Endothelial cell of umbilical vein (primary cell): ENCODE measurements at regions of chr3 and their contacts with region 1.

Region 1: DNA sequence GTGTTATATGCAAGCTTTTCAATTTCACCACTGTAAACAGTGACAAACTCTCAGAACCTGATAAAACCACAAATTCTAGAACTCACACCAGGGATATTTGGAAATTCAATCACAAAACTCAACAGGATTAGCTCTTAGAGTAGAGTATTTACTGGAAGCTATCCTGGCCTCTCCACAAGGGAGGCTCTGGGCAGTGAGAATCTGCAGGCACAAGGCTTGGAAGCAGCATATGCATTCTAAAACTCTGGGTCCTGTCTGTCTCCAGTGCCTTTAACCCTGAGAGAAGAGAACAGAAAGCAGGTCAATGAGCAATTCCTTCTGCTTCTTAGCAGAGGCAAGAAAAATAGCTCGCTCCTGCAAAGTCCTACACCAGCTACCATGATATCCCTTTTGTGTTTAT is 23.4 kb downstream of the PLSCR4 start:
- DNase-seq: no peak
- H3K4me3 ChIP-seq: no peak overlapping the region
- H3K27ac ChIP-seq: no peak overlapping the region
- H3K4me1 ChIP-seq: peaks cover 16% of the 10 kb centered on the region
- H3K27me3 ChIP-seq: no peaks in the 10 kb centered on the region
- CTCF ChIP-seq: no peak
- POLR2A ChIP-seq: no peak

Region 2: GRCh38 chr3:146250449-146251382 is 23.2 kb after region 1 on chr3 and contains the start of gene PLSCR4:
- CTCF ChIA-PET with region 1: interaction called, 5 read pairs
- POLR2A ChIA-PET with region 1: no interaction called
- dilution Hi-C with region 1: no loop called
- intact Hi-C with region 1: loop called (anchors 1 kb)
- DNase-seq: peak; percentile 93
- H3K4me3 ChIP-seq: peak within 1 kb of the TSS; percentile 94 to 97 (median 96)
- H3K27ac ChIP-seq: peak within 1 kb of the TSS; percentile 77
- H3K4me1 ChIP-seq: peaks cover 36% of the 10 kb centered on the region
- H3K27me3 ChIP-seq: no peaks in the 10 kb centered on the region
- CTCF ChIP-seq: no peak
- POLR2A ChIP-seq: peak; percentile 35
- total RNA-seq, gene PLSCR4: 81.5 and 91.8 TPM in 2 replicates